Activated CD8-positive, alpha-beta T cell treated with anti-CD3 and anti-CD28 coated beads, Interleukin-2, amount 10 ng/mL, durations not matched to agents 7 days and 5 days (primary cell): ENCODE measurements at regions of chr7 and their contacts with region 1.

Region 1: GRCh38 chr7:1065263-1066260 is 21.2 kb downstream of the GPR146 start:
- DNase-seq: peak; percentile 88
- ATAC-seq: peak; percentile 98
- H3K4me3 Mint-ChIP-seq: peak overlapping the region; percentile 31
- H3K27ac Mint-ChIP-seq: no peak overlapping the region
- H3K4me1 Mint-ChIP-seq: peaks cover 6% of the 10 kb centered on the region
- H3K27me3 Mint-ChIP-seq: no peaks in the 10 kb centered on the region

Region 2: DNA sequence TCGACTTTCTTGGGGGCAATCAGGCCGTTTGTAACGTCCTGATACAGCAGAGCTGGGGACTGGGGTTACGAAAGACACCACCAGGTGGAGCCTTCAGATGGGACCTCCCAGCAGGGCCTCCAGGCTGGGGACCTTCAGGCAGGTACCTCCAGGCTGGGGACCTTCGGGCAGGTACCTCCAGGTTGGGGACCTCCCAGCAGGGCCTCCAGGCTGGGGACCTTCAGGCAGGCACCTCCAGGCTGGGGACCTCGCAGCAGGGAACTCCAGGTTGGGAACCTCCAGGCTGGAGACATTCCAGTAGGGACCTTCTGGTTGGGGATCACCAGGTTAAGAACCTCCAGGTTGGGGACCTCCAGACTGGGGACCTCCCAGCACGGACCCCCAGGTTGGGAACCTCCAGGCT is 44.7 kb before region 1 on chr7:
- CTCF ChIA-PET with region 1: interaction called, 14 read pairs
- POLR2A ChIA-PET with region 1: no interaction called
- DNase-seq: no peak
- ATAC-seq: no peak
- H3K4me3 Mint-ChIP-seq: no peak overlapping the region
- H3K27ac Mint-ChIP-seq: no peak overlapping the region
- H3K4me1 Mint-ChIP-seq: peaks cover 4% of the 10 kb centered on the region
- H3K27me3 Mint-ChIP-seq: no peaks in the 10 kb centered on the region

Region 3: DNA sequence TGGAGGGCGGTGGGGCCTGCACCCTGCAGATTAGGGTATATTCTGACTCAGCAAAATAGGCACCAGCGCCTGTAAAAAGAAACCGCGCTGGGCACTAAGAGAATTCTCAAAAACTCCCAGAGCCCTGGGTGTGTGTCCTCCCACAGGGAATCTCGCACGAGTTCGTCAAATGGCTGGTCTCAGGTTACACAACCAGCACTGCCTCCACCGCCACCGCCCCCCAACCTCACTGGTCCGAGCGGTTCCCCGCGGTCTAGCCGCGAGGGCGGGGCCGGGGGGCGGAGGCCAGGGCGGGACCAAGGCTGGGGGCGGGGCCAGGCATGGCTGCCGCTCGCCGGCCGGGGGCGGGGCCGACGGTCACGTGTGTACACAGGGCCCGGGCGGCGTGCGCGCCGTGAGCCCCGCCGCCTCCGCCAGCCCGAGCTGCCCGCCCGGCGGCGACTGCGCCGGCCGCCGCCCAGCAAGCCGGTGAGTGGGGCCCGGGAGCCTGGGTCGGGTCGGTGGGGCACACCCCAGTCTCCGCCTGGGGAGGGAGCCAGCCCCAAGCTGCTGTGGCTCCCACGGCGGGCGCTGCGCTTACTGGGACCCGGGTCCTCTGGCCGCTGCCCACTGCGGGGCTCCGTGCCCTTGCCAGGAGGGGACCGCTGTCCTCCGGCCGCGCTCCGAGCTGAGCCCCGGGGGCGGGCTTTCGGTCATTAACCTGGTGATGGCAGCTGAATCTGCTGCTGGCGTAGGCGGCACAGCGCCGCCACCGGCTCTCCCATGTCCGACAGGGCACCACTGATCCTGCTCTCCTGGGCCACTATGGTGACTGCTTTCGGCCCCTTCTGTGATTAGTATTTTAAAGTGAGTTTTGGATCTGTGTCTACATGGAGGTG is 21.1 kb before region 1 on chr7 and contains the start of gene GPR146:
- CTCF ChIA-PET with region 1: interaction called, 29 read pairs
- POLR2A ChIA-PET with region 1: no interaction called
- DNase-seq: peak; percentile 92
- ATAC-seq: peak; percentile 94
- H3K4me3 Mint-ChIP-seq: peak within 1 kb of the TSS; percentile 77
- H3K27ac Mint-ChIP-seq: peak within 1 kb of the TSS; percentile 78
- H3K4me1 Mint-ChIP-seq: peaks cover 69% of the 10 kb centered on the region
- H3K27me3 Mint-ChIP-seq: no peaks in the 10 kb centered on the region
- total RNA-seq, gene GPR146: 2.7 to 3.1 TPM

Region 4: DNA sequence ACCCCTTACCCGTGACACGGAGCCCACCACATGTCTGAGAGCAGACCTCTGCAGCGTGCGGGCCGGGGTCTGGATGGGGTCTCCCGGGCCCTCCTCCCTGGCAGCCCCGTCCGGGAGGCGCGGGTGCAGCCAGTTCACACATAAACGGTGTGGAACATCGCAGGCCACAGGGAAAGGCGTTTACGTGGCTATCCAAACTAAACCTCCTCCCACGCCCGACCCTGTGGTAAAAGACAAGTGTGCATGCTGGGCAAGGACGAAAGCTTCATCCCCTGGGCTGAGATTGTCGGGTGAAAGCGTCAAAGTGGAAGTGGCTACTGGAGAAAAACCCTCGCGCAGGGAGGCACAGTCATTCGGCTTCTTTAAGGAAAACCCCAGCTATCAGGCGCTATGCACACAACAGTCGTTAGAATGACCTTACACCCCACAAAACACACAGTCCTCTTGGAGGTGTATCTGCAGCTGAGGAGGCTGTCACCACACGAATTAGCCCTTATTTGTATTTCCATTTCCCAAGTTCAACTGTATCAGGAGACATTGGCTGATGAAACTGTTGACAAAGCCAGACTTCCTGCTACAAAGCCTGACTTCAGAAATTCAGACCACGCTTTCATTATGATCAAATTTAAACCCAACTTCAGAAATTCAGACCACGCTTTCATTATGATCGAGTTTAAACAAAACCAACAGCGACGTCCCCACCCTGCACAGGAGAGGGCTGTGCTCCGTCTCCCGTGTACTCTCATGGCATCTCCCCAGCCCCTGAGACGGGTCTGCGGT is 37.6 kb after region 1 on chr7:
- CTCF ChIA-PET with region 1: interaction called, 12 read pairs
- POLR2A ChIA-PET with region 1: no interaction called
- DNase-seq: peak; percentile 24
- ATAC-seq: peak; percentile 46
- H3K4me3 Mint-ChIP-seq: peak overlapping the region; percentile 31
- H3K27ac Mint-ChIP-seq: peak overlapping the region; percentile 72
- H3K4me1 Mint-ChIP-seq: peaks cover 27% of the 10 kb centered on the region
- H3K27me3 Mint-ChIP-seq: no peaks in the 10 kb centered on the region

Region 5: DNA sequence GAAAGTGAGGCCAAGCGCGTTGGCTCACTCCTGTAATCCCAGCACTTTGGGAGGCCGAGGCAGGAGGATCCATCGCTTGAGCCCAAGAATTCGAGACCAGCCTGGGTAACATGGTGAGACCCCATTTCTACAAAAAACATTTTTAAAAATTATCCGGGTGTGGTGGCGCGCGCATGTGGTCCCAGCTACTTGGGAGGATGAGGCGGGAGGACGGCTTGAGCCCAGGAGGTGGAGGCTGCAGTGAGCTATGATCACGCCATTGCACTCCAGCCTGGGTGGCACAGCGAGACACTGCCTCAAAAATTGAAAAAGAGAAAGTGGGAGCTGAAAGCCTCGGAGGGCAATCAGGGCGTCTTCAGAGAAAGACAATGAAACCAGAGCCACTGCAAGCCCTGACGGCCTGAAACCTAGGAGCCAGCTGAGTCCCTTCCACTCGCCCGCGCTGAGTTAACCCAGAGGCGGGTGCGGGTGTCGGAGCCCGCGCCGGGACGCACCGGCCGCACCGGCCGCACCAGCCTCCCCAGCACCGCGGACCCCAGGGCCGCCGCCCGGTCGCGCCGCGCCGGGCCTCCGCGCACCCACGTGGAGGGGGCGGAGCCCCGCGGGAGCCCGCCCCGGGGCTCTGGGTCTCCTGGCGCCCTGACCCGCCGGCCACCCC is 72.1 kb after region 1 on chr7:
- CTCF ChIA-PET with region 1: interaction called, 10 read pairs
- POLR2A ChIA-PET with region 1: no interaction called
- DNase-seq: peak; percentile 38
- ATAC-seq: peak; percentile 78
- H3K4me3 Mint-ChIP-seq: peak overlapping the region; percentile 80
- H3K27ac Mint-ChIP-seq: peak overlapping the region; percentile 92
- H3K4me1 Mint-ChIP-seq: peaks cover 21% of the 10 kb centered on the region
- H3K27me3 Mint-ChIP-seq: no peaks in the 10 kb centered on the region